Activated CD8-positive, alpha-beta memory T cell treated with anti-CD3 and anti-CD28 coated beads, Interleukin-2, amount 10 ng/mL, durations not matched to agents 7 days and 5 days (primary cell): ENCODE measurements at regions of chr5 and their contacts with region 1.

Region 1: DNA sequence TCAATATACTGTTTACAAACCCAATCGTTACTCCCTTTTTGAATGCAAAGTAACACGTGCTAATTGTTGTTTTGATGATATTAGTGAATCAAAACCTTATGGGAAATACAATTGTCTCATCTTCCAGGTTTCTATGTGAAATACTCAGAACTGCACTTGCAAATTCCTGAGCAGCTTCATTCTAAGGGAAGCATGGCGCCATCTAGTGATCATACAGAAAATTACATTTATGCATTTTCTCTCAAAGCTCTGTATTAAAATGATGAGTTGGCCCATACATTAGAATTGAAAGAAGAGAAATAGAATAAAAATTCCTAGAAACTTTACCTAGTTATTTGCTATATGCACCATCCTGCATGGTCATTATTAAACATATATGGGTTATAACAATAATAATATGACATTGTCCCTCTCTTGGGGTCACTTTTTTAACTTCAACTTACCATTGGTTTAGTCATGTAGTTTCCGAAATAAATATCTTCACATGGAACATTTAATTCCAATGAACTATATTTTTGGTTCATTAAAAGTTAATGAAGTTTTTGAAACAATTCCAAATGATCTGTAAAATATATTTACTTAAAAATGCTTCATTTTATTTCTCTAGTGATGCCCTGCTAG is 220.0 kb downstream of the PDE4D start:
- DNase-seq: no peak
- ATAC-seq: no peak
- H3K4me3 Mint-ChIP-seq: no peak overlapping the region
- H3K27ac Mint-ChIP-seq: no peak overlapping the region
- H3K4me1 Mint-ChIP-seq: no peaks in the 10 kb centered on the region
- H3K27me3 Mint-ChIP-seq: peaks cover 17% of the 10 kb centered on the region

Region 2: GRCh38 chr5:59506285-59506877 is 167.2 kb before region 1 on chr5:
- CTCF ChIA-PET with region 1: interaction called, 11 read pairs
- DNase-seq: no peak
- ATAC-seq: no peak
- H3K4me3 Mint-ChIP-seq: no peak overlapping the region
- H3K27ac Mint-ChIP-seq: no peak overlapping the region
- H3K4me1 Mint-ChIP-seq: no peaks in the 10 kb centered on the region
- H3K27me3 Mint-ChIP-seq: peaks cover 2% of the 10 kb centered on the region

Region 3: GRCh38 chr5:59698207-59699178 is 24.9 kb after region 1 on chr5:
- CTCF ChIA-PET with region 1: no interaction called
- DNase-seq: no peak
- ATAC-seq: no peak
- H3K4me3 Mint-ChIP-seq: no peak overlapping the region
- H3K27ac Mint-ChIP-seq: no peak overlapping the region
- H3K4me1 Mint-ChIP-seq: no peaks in the 10 kb centered on the region
- H3K27me3 Mint-ChIP-seq: peaks cover 2% of the 10 kb centered on the region